Panc1 (cell line): ENCODE measurements at regions of chr9 and their contacts with region 1.

Region 1: GRCh38 chr9:125971050-125971449 is 223.9 kb downstream of the PBX3 start:
- DNase-seq: no peak
- ATAC-seq: 0 out of 2 replicates have a peak, but pooled peaks have one; percentile 15
- H3K4me3 ChIP-seq: no peak overlapping the region
- H3K27ac ChIP-seq: no peak overlapping the region
- H3K4me1 ChIP-seq: no peaks in the 10 kb centered on the region
- H3K27me3 ChIP-seq: no peaks in the 10 kb centered on the region
- CTCF ChIP-seq: no peak

Region 2: DNA sequence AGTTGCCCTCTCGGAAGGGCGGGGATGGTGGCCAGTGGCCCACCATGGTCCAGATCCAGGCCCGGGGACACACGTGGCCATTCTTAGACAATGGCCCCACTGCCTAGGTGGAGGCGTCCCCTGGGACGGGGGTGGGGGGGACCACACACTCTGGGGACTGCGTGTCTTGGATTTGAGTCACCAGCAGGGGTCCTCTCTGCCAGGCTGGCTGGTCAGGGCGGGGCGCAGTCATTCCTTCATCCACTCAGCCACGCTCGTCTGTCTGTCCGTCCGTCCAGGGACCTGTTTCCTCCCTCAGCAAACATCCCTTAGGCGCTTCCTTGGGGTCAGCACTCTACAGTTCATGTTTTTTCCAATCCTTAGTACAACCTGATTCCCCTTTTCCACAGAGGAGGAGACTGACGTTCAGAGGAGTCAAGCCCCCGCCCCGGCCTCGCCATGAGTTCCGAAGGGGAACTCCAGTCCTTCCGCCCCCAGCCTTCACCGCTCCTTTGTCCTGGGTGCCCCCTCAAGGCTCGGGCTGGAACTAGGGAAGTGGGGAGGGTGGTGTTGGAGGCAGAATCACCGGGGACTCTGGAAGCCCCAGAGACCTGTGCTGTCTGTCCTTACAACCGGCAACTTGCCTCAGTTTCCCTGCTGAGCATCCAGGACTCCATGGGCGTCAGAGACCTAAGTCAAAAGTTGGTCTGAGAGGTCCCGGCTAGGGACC is 79.0 kb after region 1 on chr9:
- CTCF ChIA-PET with region 1: interaction called, 12 read pairs
- POLR2A ChIA-PET with region 1: no interaction called
- in situ Hi-C with region 1: no loop called
- intact Hi-C with region 1: no loop called
- DNase-seq: no peak
- ATAC-seq: peak; percentile 47; the same call in 1 of the 2 replicates
- H3K4me3 ChIP-seq: no peak overlapping the region
- H3K27ac ChIP-seq: peak overlapping the region; percentile 77; the same call in 1 of the 2 replicates
- H3K4me1 ChIP-seq: peaks cover 12% of the 10 kb centered on the region
- H3K27me3 ChIP-seq: no peaks in the 10 kb centered on the region
- CTCF ChIP-seq: no peak

Region 3: DNA sequence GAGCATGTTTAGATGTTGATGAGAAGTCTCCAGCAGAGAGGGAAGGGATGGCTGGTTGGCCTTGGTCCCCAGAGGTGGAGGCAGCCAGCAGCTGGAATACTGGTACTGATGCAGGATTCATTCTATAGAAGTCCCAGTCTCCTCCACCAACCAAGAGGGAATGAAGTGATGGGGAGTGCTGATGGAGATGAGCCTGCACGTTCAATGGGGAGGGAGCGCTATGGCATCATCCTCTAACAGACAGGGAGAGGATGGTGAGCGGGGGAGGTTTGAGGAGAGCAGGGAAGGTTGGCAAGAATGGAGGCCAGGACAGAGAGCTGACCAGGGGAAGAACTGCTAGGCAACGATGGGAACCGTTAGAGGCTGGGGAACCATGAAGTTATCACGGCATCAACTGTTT is 195.8 kb after region 1 on chr9:
- CTCF ChIA-PET with region 1: no interaction called
- POLR2A ChIA-PET with region 1: no interaction called
- in situ Hi-C with region 1: no loop called
- intact Hi-C with region 1: no loop called
- DNase-seq: no peak
- ATAC-seq: no peak
- H3K4me3 ChIP-seq: no peak overlapping the region
- H3K27ac ChIP-seq: no peak overlapping the region
- H3K4me1 ChIP-seq: no peaks in the 10 kb centered on the region
- H3K27me3 ChIP-seq: no peaks in the 10 kb centered on the region; the same call in 1 of the 2 replicates
- CTCF ChIP-seq: no peak